Gastrocnemius medialis (tissue), 4 donors: ENCODE measurements at regions of chr3 and their contacts with region 1.

Region 1: GRCh38 chr3:155334914-155335723 is 41.6 kb upstream of the STRIT1 start:
- DNase-seq: no peak
- ATAC-seq: no peak
- H3K4me3 ChIP-seq: no peak overlapping the region
- H3K27ac ChIP-seq: no peak overlapping the region
- H3K4me1 ChIP-seq: no peaks in the 10 kb centered on the region
- H3K27me3 ChIP-seq: no peaks in the 10 kb centered on the region
- CTCF ChIP-seq: no peak
- POLR2A ChIP-seq: no peak

Region 2: GRCh38 chr3:154334973-154335420 is 1000.1 kb before region 1 on chr3:
- in situ Hi-C with region 1: loop called in 3 of 4 experiments (anchors 25 kb)
- intact Hi-C with region 1: no loop called
- DNase-seq: no peak
- ATAC-seq: peak in 1 of 2 donors; percentile 54
- H3K4me3 ChIP-seq: no peak overlapping the region
- H3K27ac ChIP-seq: no peak overlapping the region
- H3K4me1 ChIP-seq: no peaks in the 10 kb centered on the region
- H3K27me3 ChIP-seq: peaks cover 0 to 3% (median 0%) of the 10 kb centered on the region in 3 donors
- CTCF ChIP-seq: peak; percentile 34 to 68 (median 42)
- POLR2A ChIP-seq: no peak